T-cell (primary cell): ENCODE measurements at regions of chr6 and their contacts with region 1.

Region 1: GRCh38 chr6:163620670-163621330 is 206.3 kb downstream of the QKI start:
- DNase-seq: no peak
- ATAC-seq: no peak
- H3K4me3 ChIP-seq: no peak overlapping the region
- H3K4me3 Mint-ChIP-seq: no peak overlapping the region
- H3K27ac ChIP-seq: no peak overlapping the region
- H3K27ac Mint-ChIP-seq: no peak overlapping the region
- H3K4me1 ChIP-seq: no peaks in the 10 kb centered on the region
- H3K4me1 Mint-ChIP-seq: no peaks in the 10 kb centered on the region
- H3K27me3 ChIP-seq: no peaks in the 10 kb centered on the region
- H3K27me3 Mint-ChIP-seq: peaks cover 0 to 1% of the 10 kb centered on the region in 2 donors

Region 2: DNA sequence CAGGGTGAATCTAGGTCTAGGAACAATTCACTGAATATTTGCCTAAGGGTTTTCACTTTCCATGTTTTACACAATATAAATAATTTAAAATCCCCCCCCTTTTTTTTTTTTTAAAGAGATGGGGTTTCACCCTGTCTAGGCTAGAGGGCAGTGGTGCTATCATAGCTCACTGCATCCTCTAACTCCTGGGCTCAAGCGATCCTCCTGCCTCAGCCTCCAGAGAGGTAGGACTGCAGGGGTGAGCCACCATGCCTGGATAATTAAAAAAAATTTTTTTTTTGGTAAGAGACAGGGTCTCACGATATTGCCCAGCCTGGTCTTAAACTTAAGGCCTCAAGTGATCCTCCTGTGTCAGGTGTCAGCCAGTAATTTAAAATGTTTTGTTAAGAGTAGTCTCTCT is 188.5 kb before region 1 on chr6:
- CTCF ChIA-PET with region 1: no interaction called
- POLR2A ChIA-PET with region 1: interaction called in 1 of 2 experiments, 12 read pairs
- DNase-seq: no peak
- ATAC-seq: no peak
- H3K4me3 ChIP-seq: no peak overlapping the region
- H3K4me3 Mint-ChIP-seq: no peak overlapping the region
- H3K27ac ChIP-seq: no peak overlapping the region
- H3K27ac Mint-ChIP-seq: no peak overlapping the region
- H3K4me1 ChIP-seq: peaks cover 5 to 6% of the 10 kb centered on the region in 2 experiments
- H3K4me1 Mint-ChIP-seq: peaks cover 58 to 65% (median 58%) of the 10 kb centered on the region in 3 donors
- H3K27me3 ChIP-seq: no peaks in the 10 kb centered on the region
- H3K27me3 Mint-ChIP-seq: no peaks in the 10 kb centered on the region

Region 3: GRCh38 chr6:163533443-163533842 is 87.4 kb before region 1 on chr6:
- CTCF ChIA-PET with region 1: no interaction called
- POLR2A ChIA-PET with region 1: no interaction called
- DNase-seq: no peak
- ATAC-seq: no peak
- H3K4me3 ChIP-seq: no peak overlapping the region
- H3K4me3 Mint-ChIP-seq: no peak overlapping the region
- H3K27ac ChIP-seq: no peak overlapping the region
- H3K27ac Mint-ChIP-seq: no peak overlapping the region
- H3K4me1 ChIP-seq: peaks cover 0 to 2% of the 10 kb centered on the region in 2 experiments
- H3K4me1 Mint-ChIP-seq: peaks cover 44 to 55% (median 54%) of the 10 kb centered on the region in 3 donors
- H3K27me3 ChIP-seq: no peaks in the 10 kb centered on the region
- H3K27me3 Mint-ChIP-seq: no peaks in the 10 kb centered on the region